PC-9 (cell line): ENCODE measurements at regions of chr6 and their contacts with region 1.

Region 1: GRCh38 chr6:154675602-154676088 is 57.6 kb upstream of the SCAF8 start:
- DNase-seq: peak; percentile 77 to 85
- H3K4me3 ChIP-seq: no peak overlapping the region
- H3K27ac ChIP-seq: no peak overlapping the region
- H3K4me1 ChIP-seq: no peaks in the 10 kb centered on the region
- H3K27me3 ChIP-seq: no peaks in the 10 kb centered on the region
- CTCF ChIP-seq: peak; percentile 99

Region 2: DNA sequence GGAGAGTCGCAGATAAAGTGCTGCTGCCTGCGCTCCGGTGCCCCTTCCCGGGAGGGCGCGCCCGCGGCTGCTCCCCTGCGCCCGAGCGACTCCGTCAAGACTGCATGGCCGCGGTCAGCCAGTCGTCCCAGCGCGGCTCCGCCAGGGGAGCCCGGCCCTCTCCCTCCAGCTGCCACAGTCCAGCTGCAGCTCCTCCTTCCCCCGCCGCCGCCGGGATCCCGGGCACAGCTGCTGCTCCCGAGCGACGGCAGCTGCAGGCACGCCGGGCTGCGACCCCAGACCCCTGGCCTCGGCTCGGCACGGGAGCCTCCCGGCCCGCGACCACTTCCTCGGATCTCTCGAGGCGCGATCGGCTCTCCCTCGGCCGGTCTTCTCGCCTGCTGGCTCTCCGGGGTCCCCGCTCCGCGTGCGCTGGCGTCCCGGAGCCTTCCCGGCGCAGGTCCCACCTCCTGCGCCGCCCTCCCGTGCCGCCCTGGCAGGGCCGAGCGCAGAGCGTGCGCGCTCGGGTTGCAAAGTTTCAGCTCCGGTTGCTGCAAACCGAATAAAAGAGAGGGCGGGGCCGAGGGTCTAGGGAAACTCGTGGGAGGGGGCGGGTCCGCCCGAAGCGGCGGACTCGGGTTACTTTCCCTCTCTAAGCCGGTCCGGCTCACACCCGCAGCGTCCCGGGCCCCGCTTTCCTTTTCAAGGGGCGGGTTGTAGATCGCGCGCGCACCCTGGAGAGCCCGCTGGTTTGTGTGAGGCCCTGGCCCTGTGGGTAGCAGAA is 165.3 kb before region 1 on chr6 and contains the start of gene CNKSR3:
- CTCF ChIA-PET with region 1: interaction called, 6 read pairs
- POLR2A ChIA-PET with region 1: no interaction called
- intact Hi-C with region 1: loop called (anchors 2 kb)
- DNase-seq: peak; percentile 71 to 80
- H3K4me3 ChIP-seq: peak within 1 kb of the TSS; percentile 94
- H3K27ac ChIP-seq: peak within 1 kb of the TSS; percentile 66
- H3K4me1 ChIP-seq: peaks cover 23% of the 10 kb centered on the region
- H3K27me3 ChIP-seq: no peaks in the 10 kb centered on the region
- CTCF ChIP-seq: no peak
- total RNA-seq, gene CNKSR3: 3.4 and 4.7 TPM in 2 replicates

Region 3: DNA sequence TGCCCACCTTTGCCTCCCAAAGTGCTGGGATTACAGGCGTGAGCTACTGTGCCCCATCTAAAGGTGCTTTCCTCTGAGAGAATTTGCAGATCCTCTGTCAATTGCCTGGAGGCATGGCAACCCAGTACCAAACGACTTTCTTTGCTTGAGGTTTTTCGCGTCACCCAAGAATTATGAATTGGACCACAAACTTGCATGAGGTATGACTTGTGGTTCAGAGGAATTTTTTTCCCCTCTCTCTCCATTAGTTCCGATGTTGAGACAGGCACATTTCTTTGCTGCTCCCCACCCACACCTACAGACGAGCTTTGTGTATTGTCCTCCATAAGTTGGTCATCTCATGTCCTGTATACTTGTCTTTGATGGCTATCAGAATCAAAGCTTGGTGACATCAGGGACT is 45.8 kb after region 1 on chr6:
- CTCF ChIA-PET with region 1: no interaction called
- POLR2A ChIA-PET with region 1: no interaction called
- intact Hi-C with region 1: no loop called
- DNase-seq: peak; percentile 59 to 75
- H3K4me3 ChIP-seq: no peak overlapping the region
- H3K27ac ChIP-seq: no peak overlapping the region
- H3K4me1 ChIP-seq: no peaks in the 10 kb centered on the region
- H3K27me3 ChIP-seq: no peaks in the 10 kb centered on the region
- CTCF ChIP-seq: no peak

Region 4: GRCh38 chr6:154749341-154749740 is 73.7 kb after region 1 on chr6:
- CTCF ChIA-PET with region 1: no interaction called
- POLR2A ChIA-PET with region 1: no interaction called
- intact Hi-C with region 1: no loop called
- DNase-seq: no peak
- H3K4me3 ChIP-seq: no peak overlapping the region
- H3K27ac ChIP-seq: no peak overlapping the region
- H3K4me1 ChIP-seq: no peaks in the 10 kb centered on the region
- H3K27me3 ChIP-seq: no peaks in the 10 kb centered on the region
- CTCF ChIP-seq: no peak

Region 5: DNA sequence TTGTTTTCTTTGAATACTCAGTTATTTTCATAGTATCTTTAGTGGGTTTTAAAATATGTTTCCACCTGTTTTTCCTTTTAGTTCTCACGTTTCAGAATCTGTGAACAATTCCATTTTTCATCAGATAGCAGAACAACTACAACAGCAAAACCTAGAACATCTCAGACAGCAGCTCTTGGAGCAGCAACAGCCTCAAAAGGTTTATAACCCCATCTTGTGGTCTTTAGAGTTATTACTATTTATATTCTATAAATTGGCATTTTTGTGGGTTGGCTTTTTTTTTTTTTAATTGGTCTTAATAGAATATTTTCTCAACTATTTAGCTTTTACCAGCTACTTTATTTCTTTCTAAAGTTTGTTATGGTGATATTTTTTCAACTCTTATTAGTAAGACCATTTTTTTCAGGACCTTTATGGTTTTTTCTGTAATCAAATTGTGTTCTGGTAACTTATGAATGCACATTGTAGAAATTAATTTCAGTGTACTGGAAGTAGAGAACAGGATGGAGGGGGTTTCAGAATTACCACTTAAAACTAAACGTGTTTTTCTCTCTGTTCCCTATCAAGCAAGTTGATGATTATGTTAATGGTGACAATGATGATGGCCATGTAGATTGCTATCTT is 129.8 kb after region 1 on chr6:
- CTCF ChIA-PET with region 1: interaction called, 12 read pairs
- POLR2A ChIA-PET with region 1: interaction called, 6 read pairs
- intact Hi-C with region 1: loop called (anchors 1 kb)
- DNase-seq: no peak
- H3K4me3 ChIP-seq: no peak overlapping the region
- H3K27ac ChIP-seq: no peak overlapping the region
- H3K4me1 ChIP-seq: no peaks in the 10 kb centered on the region
- H3K27me3 ChIP-seq: no peaks in the 10 kb centered on the region
- CTCF ChIP-seq: peak; percentile 69

Region 6: DNA sequence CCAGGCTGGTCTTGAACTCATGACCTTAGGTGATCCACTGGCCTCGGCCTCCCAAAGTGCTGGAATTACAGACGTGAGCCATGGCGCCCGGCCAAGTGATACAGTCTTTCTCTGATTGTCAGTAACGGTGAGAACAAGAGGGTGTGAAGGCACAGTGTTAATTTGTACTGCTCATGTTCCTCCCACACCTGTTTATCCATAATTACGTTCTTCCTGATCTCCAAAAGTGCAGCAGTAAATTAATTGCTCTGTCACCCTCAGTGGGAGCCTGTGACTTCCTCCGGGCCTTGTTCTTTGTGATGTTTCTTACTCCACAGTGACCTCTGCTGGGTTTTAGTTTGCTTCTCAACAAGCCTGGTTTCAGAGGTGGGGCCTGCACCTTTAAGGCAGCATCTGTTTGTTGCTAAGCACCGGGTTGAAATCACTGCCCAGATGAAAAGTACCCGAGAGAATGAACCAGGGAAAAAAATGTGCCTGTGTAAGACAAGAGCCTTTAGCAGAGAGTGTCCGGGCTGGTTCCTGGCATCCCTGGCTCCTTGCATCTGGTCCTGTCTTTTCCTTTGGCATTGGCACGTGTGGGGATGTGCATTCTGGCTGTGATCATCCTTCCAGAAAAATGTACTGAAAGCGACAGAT is 499.0 kb after region 1 on chr6:
- CTCF ChIA-PET with region 1: no interaction called
- POLR2A ChIA-PET with region 1: no interaction called
- intact Hi-C with region 1: loop called (anchors 2 kb)
- DNase-seq: peak; percentile 60 to 81
- H3K4me3 ChIP-seq: no peak overlapping the region
- H3K27ac ChIP-seq: no peak overlapping the region
- H3K4me1 ChIP-seq: peaks cover 16% of the 10 kb centered on the region
- H3K27me3 ChIP-seq: no peaks in the 10 kb centered on the region
- CTCF ChIP-seq: peak; percentile 71